ENCODE measurements at regions of chr3 and their contacts with region 1.

Region 1: DNA sequence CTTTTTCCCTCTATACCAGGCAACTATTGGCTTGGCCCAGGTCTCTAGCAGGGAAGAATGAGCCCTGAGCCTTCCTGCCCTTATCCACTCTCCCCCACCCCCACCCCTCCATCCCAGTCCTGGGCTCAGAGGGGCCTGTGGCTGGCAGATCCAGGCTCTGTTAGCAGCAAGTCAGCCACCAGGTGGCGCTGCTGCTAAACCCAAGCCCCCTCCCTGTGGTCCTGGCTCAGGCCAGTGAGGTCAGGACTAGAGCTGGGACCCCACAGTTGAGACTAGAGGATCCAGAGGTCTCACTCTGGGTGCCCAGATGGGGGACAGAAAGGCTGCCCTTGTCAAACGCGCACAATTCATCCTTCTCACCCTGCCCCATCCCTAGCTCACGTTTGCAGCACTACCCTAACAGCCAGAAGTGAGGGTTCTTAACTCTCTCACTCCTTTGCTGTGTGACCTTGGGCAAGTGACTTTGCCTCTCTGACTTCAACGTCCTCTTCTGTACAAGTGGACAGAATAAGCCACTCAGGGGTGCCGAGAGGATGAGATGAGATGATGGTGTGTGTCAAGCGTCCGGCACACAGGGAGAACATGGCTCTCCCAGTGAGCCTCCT is 46.8 kb upstream of the SLC6A1 start:
- DNase-seq: peak; percentile 72
- ATAC-seq: peak; percentile 78 to 82
- H3K4me3 ChIP-seq: no peak overlapping the region
- H3K27ac ChIP-seq: no peak overlapping the region
- H3K4me1 ChIP-seq: no peaks in the 10 kb centered on the region
- H3K27me3 ChIP-seq: peaks cover 4% of the 10 kb centered on the region
- CTCF ChIP-seq: peak; percentile 88

Region 2: DNA sequence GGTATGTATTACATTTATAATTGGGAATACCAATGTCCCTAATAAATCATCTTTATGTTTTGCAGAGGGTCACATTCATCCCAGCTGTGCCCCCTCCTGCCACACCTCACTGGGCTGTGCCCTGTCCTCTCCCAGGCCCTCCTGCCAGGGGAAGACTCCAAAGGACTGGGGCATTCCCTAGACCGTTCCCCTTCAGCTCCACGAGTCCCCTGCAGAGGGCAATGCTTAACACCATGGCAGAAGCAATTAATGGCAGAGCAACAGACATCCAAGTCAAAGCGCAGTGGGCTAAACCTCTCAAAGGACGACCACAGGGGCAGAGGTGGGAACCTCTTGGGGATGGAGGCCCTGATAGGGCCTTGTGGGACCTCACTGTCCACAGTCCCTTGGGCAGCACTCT is 553.5 kb before region 1 on chr3:
- intact Hi-C with region 1: no loop called
- DNase-seq: no peak
- ATAC-seq: no peak
- H3K4me3 ChIP-seq: no peak overlapping the region
- H3K27ac ChIP-seq: no peak overlapping the region
- H3K4me1 ChIP-seq: no peaks in the 10 kb centered on the region
- H3K27me3 ChIP-seq: no peaks in the 10 kb centered on the region
- CTCF ChIP-seq: no peak

Region 3: GRCh38 chr3:11059090-11059798 is 113.5 kb after region 1 on chr3:
- intact Hi-C with region 1: loop called (anchors 10 kb)
- DNase-seq: no peak
- ATAC-seq: peak; percentile 89
- H3K4me3 ChIP-seq: no peak overlapping the region
- H3K27ac ChIP-seq: no peak overlapping the region
- H3K4me1 ChIP-seq: peaks cover 7% of the 10 kb centered on the region
- H3K27me3 ChIP-seq: peaks cover 14% of the 10 kb centered on the region
- CTCF ChIP-seq: peak; percentile 82

Region 4: GRCh38 chr3:11091088-11091590 is 145.4 kb after region 1 on chr3:
- intact Hi-C with region 1: no loop called
- DNase-seq: no peak
- ATAC-seq: no peak
- H3K4me3 ChIP-seq: no peak overlapping the region
- H3K27ac ChIP-seq: no peak overlapping the region
- H3K4me1 ChIP-seq: peaks cover 9% of the 10 kb centered on the region
- H3K27me3 ChIP-seq: no peaks in the 10 kb centered on the region
- CTCF ChIP-seq: no peak

Measured in lower lobe of right lung (tissue), 2 donors.